PC-3 (cell line): ENCODE measurements at regions of chr22 and their contacts with region 1.

Region 1: DNA sequence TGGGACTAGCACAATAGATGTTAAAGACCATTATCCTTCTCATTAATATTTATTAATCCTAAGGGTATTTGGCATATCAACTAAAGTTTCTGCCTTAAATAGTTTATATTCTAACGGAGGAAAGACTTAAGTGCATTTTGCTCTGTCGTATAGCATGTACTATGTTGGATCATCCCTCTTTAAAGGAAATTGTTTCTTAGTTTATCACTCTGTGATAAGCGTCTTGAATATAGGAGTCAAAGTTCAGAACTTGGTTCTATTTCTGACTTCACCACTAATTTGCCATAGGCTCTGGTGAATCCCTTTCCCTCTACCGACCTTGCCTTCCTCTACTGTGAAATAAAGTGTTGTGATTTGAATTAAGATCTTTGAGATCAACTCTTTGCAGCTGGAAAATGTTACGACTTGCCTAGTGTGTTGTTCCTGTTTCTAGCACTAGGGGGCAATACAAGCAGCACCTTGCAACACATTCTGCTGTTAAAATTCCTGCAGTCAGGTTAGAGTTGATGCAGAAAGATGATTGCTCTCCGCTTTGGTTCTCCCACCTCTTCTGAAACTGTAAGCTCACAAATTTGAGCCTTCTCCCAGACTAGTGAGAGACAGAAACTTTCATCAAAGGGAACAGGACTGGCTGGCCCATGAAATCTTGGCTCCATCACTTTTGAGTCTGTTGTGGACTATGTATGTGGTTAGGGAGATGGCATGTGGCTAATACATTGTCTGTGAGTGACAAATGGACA is 27.8 kb upstream of the ZNRF3 start:
- DNase-seq: peak; percentile 72
- ATAC-seq: peak; percentile 57
- H3K4me3 ChIP-seq: no peak overlapping the region
- H3K27ac ChIP-seq: no peak overlapping the region
- H3K4me1 ChIP-seq: no peaks in the 10 kb centered on the region
- H3K27me3 ChIP-seq: no peaks in the 10 kb centered on the region
- CTCF ChIP-seq: peak; percentile 84

Region 2: DNA sequence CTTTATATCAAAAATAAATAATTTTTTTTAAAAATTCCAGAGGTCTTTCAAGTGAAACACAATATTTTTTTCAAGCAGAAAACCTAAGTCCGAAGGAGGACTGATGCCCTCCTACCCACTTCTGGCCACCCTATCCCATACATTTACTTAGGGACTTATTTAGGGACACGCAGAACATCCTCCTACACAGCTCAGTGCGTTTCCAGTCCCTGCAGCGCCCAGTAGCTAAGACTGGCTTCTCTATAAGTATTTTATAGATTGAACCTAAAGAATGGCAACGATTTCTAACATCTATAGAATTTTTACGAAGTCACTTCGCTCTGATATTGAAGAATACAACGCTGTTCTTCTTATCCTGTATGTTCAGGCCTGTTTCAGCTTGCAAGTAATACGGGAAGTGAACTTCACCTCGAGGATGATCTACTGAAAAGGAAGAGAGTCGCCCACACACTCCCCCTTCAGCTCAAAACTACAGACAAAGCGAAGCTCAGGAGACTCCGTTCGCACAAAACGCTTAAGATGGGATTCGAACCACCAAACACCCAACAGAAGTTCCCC is 114.2 kb before region 1 on chr22:
- CTCF ChIA-PET with region 1: no interaction called
- POLR2A ChIA-PET with region 1: no interaction called
- intact Hi-C with region 1: no loop called
- DNase-seq: no peak
- ATAC-seq: no peak; the same call in 1 of the 2 replicates
- H3K4me3 ChIP-seq: peak overlapping the region; percentile 81
- H3K27ac ChIP-seq: no peak overlapping the region
- H3K4me1 ChIP-seq: peaks cover 7% of the 10 kb centered on the region
- H3K27me3 ChIP-seq: no peaks in the 10 kb centered on the region
- CTCF ChIP-seq: no peak

Region 3: GRCh38 chr22:28882878-28883656 is 27.5 kb after region 1 on chr22 and contains the start of gene ZNRF3:
- CTCF ChIA-PET with region 1: no interaction called
- POLR2A ChIA-PET with region 1: no interaction called
- intact Hi-C with region 1: no loop called
- DNase-seq: peak; percentile 83
- ATAC-seq: peak; percentile 67
- H3K4me3 ChIP-seq: peak within 1 kb of the TSS; percentile 93
- H3K27ac ChIP-seq: peak within 1 kb of the TSS; percentile 31
- H3K4me1 ChIP-seq: peaks cover 28% of the 10 kb centered on the region
- H3K27me3 ChIP-seq: no peaks in the 10 kb centered on the region
- CTCF ChIP-seq: no peak
- total RNA-seq, gene ZNRF3: 8.1 and 9.4 TPM in 2 replicates

Region 4: DNA sequence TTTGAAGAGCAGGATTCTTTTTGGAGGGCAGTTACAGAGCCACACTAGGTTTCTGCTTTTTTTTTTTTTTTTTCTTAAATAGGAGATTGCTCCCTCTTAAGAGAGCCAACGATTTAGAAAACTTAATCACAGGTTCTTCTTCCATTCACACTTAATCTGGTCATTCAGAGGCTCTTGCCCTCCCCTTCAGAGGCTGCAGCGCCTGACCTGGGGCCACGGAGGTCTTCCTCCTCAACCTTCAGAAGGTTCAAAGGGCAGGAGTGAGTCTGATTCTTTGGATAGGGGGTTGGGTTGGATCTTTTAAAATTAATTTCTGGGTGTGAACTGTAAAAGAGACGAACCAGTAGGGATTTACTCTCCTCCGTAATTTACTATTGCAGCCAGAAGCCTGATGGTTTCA is 84.9 kb after region 1 on chr22:
- CTCF ChIA-PET with region 1: interaction called, 14 read pairs
- POLR2A ChIA-PET with region 1: no interaction called
- intact Hi-C with region 1: no loop called
- DNase-seq: no peak
- ATAC-seq: no peak
- H3K4me3 ChIP-seq: no peak overlapping the region
- H3K27ac ChIP-seq: no peak overlapping the region
- H3K4me1 ChIP-seq: no peaks in the 10 kb centered on the region
- H3K27me3 ChIP-seq: no peaks in the 10 kb centered on the region
- CTCF ChIP-seq: no peak